T-cell (primary cell): ENCODE measurements at regions of chr19 and their contacts with region 1.

Region 1: DNA sequence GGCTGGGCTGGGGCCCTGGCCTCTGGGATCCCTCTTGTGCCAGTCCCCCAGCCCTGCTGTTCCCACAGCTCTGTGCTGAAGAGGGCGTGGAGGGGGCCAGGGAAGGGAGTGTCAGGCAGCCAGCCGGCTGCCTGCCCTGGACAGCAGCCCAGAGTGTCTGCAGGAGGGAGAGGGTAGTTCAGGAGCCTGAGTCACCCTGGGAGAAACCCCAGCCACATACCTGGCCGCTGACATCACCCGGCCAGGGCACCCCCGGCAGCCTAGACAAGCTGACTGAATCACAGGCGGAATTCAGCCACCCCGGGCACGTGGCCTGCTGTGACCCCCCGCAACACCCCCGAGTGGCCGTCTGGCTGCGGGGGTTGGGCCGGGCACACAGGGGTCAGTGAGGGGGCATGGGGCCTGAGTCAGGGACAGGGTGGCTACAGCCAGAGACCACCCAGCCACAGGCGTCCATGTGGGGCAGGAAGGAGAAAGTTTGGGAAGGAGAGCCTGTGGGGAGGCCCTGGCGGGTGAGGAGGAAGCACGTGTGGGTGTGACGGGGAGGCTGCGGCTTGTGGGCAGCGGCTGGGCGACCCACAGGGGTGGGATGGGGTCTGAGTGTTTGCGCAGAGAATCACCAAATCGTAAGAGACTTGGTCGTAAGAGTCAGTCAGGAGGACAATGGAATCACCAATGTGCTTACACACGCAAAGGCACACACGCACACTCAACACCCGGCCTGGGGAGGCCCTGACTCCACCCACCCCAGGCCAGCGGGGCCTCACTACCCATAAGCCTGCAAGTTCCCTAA is 11.9 kb upstream of the FOSB start:
- DNase-seq: peak in 30 of 35 experiments; percentile 35 to 80 (median 54)
- ATAC-seq: peak; percentile 21 to 51 (median 40)
- H3K4me3 ChIP-seq: no peak overlapping the region
- H3K4me3 Mint-ChIP-seq: peak overlapping the region in 2 of 3 donors; percentile 9 to 50
- H3K27ac ChIP-seq: peak overlapping the region; percentile 1
- H3K27ac Mint-ChIP-seq: peak overlapping the region in 1 of 2 donors; percentile 11
- H3K4me1 ChIP-seq: peaks cover 10 to 36% of the 10 kb centered on the region in 2 experiments
- H3K4me1 Mint-ChIP-seq: peaks cover 29 to 37% (median 36%) of the 10 kb centered on the region in 3 donors
- H3K27me3 ChIP-seq: peaks cover 0 to 16% of the 10 kb centered on the region in 2 experiments
- H3K27me3 Mint-ChIP-seq: peaks cover 0 to 3% of the 10 kb centered on the region in 2 donors

Region 2: GRCh38 chr19:45370410-45371204 is 85.3 kb before region 1 on chr19 and contains the start of gene ERCC2:
- CTCF ChIA-PET with region 1: no interaction called
- POLR2A ChIA-PET with region 1: no interaction called
- DNase-seq: peak; percentile 93 to 100 (median 99)
- ATAC-seq: peak; percentile 98 to 99 (median 98)
- H3K4me3 ChIP-seq: peak within 1 kb of the TSS; percentile 85 to 90
- H3K4me3 Mint-ChIP-seq: peak within 1 kb of the TSS; percentile 76 to 93 (median 91)
- H3K27ac ChIP-seq: peak within 1 kb of the TSS; percentile 76
- H3K27ac Mint-ChIP-seq: peak within 1 kb of the TSS; percentile 96 to 98
- H3K4me1 ChIP-seq: peaks cover 2 to 20% of the 10 kb centered on the region in 2 experiments
- H3K4me1 Mint-ChIP-seq: peaks cover 4 to 15% (median 14%) of the 10 kb centered on the region in 3 donors
- H3K27me3 ChIP-seq: peaks cover 0 to 4% of the 10 kb centered on the region in 2 experiments
- H3K27me3 Mint-ChIP-seq: peaks cover 0 to 3% of the 10 kb centered on the region in 2 donors
- total RNA-seq, gene ERCC2: 14.5 to 23.2 (median 21.3) TPM

Region 3: GRCh38 chr19:45404557-45405434 is 51.1 kb before region 1 on chr19 and contains the start of gene PPP1R13L:
- CTCF ChIA-PET with region 1: no interaction called
- POLR2A ChIA-PET with region 1: no interaction called
- DNase-seq: peak in 11 of 35 experiments; percentile 16 to 47 (median 29)
- ATAC-seq: peak in 3 of 4 experiments; percentile 2 to 28 (median 2)
- H3K4me3 ChIP-seq: peak within 1 kb of the TSS; percentile 76 to 92
- H3K4me3 Mint-ChIP-seq: peak within 1 kb of the TSS; percentile 91 to 98 (median 92)
- H3K27ac ChIP-seq: peak within 1 kb of the TSS; percentile 84
- H3K27ac Mint-ChIP-seq: peak within 1 kb of the TSS; percentile 93 to 95
- H3K4me1 ChIP-seq: peaks cover 3 to 42% of the 10 kb centered on the region in 2 experiments
- H3K4me1 Mint-ChIP-seq: peaks cover 32 to 47% (median 36%) of the 10 kb centered on the region in 3 donors
- H3K27me3 ChIP-seq: peaks cover 0 to 42% of the 10 kb centered on the region in 2 experiments
- H3K27me3 Mint-ChIP-seq: peaks cover 17 to 30% of the 10 kb centered on the region in 2 donors
- total RNA-seq, gene PPP1R13L: 7.9 to 15.7 (median 12.5) TPM

Region 4: DNA sequence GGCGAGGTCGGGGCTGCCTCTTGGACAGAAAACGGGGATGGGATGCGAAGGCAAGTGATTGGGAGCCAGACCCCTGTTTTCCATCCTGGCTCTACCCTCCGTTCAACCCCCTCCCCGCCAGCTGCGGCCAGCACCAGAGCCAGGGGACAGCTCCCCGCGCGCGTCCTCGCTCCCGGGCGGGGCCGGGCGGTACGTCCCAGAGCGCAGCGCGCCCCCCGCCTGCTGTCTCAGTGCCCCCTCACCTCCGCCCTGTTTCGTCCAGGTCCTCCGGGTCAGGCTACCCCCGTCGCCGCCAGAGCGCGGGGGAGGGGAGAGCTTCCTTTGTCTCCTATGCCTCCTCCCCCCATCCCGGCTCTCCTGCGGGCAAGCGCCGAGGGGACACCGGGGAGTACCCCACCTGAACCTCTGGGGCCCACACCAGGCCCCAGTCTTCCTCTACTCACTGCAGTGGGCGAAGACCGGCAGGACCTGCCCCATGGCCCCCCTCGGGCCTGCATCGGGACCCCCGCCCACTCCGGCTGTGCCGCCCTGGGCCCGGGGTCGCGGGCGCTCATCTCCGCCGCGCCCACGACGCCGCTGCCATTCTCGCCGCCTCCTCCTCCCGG is 40.5 kb after region 1 on chr19:
- CTCF ChIA-PET with region 1: interaction called in 1 of 2 experiments, 11 read pairs
- POLR2A ChIA-PET with region 1: interaction called in 1 of 2 experiments, 4 read pairs
- DNase-seq: peak in 15 of 35 experiments; percentile 28 to 63 (median 44)
- ATAC-seq: peak; percentile 25 to 35 (median 30)
- H3K4me3 ChIP-seq: peak overlapping the region; percentile 60 to 84
- H3K4me3 Mint-ChIP-seq: peak overlapping the region; percentile 60 to 91 (median 74)
- H3K27ac ChIP-seq: no peak overlapping the region
- H3K27ac Mint-ChIP-seq: no peak overlapping the region
- H3K4me1 ChIP-seq: peaks cover 16 to 51% of the 10 kb centered on the region in 2 experiments
- H3K4me1 Mint-ChIP-seq: peaks cover 35 to 47% (median 44%) of the 10 kb centered on the region in 3 donors
- H3K27me3 ChIP-seq: peaks cover 12 to 33% of the 10 kb centered on the region in 2 experiments
- H3K27me3 Mint-ChIP-seq: peaks cover 13 to 17% of the 10 kb centered on the region in 2 donors